ENCODE measurements at regions of chr2 and their contacts with region 1.

Region 1: GRCh38 chr2:196453613-196454047 is 185.9 kb upstream of the CCDC150 start:
- ATAC-seq: peak in 3 of 8 experiments; percentile 64 to 72 (median 67)
- H3K4me3 ChIP-seq: no peak overlapping the region
- H3K27ac ChIP-seq: no peak overlapping the region
- H3K4me1 ChIP-seq: no peaks in the 10 kb centered on the region

Region 2: DNA sequence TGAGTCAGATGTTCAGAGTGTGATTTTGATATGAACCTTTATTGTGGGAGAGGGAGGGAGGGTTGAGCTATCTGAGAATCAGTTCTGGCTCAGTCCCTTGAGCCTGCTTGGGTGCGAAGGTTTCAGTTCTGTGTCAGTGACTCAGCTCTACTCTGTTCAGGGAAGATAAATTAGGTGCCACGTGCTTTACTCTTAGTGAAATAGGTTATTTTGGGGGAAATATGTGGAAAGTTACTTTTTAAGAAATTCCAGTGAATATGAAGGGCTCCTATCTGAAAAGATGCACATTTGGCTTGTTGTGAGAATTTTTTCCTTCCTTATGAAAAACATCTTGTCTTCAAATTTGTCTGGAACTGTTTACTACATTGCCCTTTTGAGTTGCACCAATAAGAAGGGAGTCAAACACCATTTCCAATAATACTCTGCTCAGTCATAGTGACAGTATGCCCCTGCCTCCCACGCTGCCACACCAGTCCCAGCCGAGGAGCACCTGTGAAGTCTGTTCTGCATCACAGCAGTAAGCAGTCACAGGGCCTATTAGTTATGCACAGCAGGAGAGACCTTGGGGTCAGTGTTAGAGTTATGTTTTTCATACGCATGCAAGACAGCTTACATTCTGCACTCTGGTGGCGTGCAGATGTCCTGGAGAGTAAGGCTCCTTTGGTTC is 352.2 kb before region 1 on chr2:
- in situ Hi-C with region 1: loop called in 1 of 9 experiments (anchors 25 kb)
- ATAC-seq: peak; percentile 86 to 97 (median 92)
- H3K4me3 ChIP-seq: no peak overlapping the region
- H3K27ac ChIP-seq: no peak overlapping the region
- H3K4me1 ChIP-seq: peaks cover 5 to 10% of the 10 kb centered on the region in 2 donors

Region 3: DNA sequence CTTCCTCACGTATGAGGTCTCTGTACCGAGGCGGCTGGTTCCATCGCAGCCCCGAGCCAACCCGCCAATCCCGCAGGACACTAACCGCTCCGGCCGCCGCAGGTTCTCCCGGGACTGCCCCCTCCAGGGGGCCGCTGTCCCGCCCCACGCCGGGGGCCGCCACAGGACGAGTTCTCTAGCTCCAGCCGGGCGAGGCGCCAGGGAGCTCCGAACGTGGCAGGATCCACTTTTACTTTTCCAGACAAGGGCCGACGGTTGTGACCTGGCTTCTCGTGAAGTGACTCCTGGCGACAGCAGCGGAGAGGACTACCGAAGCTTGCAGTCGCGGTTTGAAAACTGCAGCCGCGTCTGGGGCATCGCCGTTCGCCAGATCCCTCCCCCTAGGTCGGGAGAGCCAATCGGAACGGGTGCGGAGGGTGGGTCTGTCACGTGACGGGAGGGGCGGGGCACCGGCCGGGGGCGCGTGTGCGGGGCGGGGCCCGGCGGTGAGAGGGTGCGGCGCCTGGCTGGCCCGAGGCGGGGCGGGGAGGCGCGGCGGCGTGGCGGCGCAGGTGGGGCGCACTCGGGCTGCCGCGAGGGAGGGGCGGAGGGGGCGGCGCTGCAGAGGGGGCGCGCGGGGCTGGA is 282.3 kb before region 1 on chr2 and contains the start of gene STK17B:
- in situ Hi-C with region 1: no loop called
- ATAC-seq: peak; percentile 88 to 92 (median 90)
- H3K4me3 ChIP-seq: peak within 1 kb of the TSS; percentile 65 to 95 (median 74)
- H3K27ac ChIP-seq: peak within 1 kb of the TSS in 1 of 2 donors; percentile 48
- H3K4me1 ChIP-seq: peaks cover 0 to 2% of the 10 kb centered on the region in 2 donors
- total RNA-seq, gene STK17B: 2.7 to 28.3 (median 5.8) TPM

Region 4: GRCh38 chr2:196295005-196295404 is 158.6 kb before region 1 on chr2:
- in situ Hi-C with region 1: loop called in 1 of 9 experiments (anchors 5 kb)
- ATAC-seq: no peak
- H3K4me3 ChIP-seq: no peak overlapping the region
- H3K27ac ChIP-seq: no peak overlapping the region
- H3K4me1 ChIP-seq: no peaks in the 10 kb centered on the region

Region 5: GRCh38 chr2:196792865-196793264 is 339.2 kb after region 1 on chr2:
- in situ Hi-C with region 1: no loop called
- ATAC-seq: no peak
- H3K4me3 ChIP-seq: no peak overlapping the region
- H3K27ac ChIP-seq: no peak overlapping the region
- H3K4me1 ChIP-seq: peaks cover 0 to 5% of the 10 kb centered on the region in 2 donors